Mucosa of descending colon (tissue), 3 donors: ENCODE measurements at regions of chr10 and their contacts with region 1.

Region 1: GRCh38 chr10:59625721-59626522 is 83.7 kb downstream of the SLC16A9 start:
- DNase-seq: peak in 1 of 3 donors; percentile 34
- ATAC-seq: peak; percentile 84
- H3K4me3 ChIP-seq: no peak overlapping the region
- H3K4me1 ChIP-seq: peaks cover 3% of the 10 kb centered on the region
- CTCF ChIP-seq: peak; percentile 56

Region 2: DNA sequence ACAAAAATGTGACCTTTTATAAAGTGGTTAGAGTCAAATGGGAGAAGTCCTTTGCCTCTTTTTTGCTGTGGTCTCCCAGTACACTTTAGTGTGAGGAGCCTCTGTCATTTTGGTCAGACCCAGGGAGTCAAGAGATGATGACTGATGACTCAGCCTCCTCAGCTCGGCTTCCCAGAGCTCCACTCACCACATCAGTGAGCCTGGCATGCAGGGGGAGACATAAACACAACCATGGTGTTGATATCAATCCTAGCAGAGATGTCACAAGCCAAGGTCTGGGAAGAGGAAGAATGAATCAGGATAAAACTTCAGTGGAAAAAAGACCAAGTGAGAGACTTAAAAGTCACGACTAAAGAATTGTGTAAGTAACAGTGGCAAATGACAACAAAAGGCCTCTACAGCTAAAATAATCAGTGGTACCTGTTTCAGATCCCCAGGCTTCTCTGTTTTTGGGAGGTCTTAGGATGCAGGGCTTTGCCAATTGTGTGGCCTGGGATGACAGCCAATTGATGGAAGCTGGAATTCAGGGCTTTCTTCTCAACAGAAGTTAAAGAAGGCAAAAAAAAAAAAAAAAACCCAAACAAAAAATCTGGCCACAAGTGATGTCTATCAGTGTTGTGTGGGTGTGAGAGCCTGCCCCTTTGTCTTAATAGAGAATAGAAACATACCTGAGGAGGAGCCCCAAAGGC is 1190.5 kb before region 1 on chr10:
- intact Hi-C with region 1: no loop called
- DNase-seq: peak in 2 of 3 donors; percentile 27 to 54
- ATAC-seq: peak; percentile 63
- H3K4me3 ChIP-seq: no peak overlapping the region
- H3K4me1 ChIP-seq: no peaks in the 10 kb centered on the region
- CTCF ChIP-seq: no peak

Region 3: DNA sequence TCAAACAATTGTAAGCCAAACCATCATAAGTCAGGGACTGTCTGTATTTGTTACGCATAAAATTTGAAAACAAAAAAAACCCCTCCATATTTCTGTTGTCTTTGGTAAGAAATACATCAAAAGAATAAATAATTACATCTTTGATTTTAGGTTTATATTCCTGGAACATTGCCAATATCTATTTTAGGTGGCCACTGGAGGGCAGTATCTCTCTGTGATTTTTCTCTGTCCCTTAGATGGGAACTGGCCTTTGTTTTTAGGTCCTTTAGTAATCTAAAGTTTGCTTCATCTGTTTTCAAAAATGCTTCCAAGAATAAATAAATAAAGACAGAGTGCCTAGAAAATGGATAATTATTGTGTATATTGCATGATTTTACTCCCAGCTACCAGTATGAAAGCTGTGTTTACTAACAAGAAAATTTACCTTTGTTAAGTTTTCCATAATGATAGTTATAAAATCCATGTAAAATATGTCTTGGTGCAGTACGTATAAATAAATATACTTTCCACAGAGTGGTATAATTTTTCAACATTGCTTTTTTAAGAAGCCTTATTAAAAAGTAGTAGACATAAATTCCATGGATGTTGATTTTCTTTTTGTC is 385.2 kb before region 1 on chr10:
- intact Hi-C with region 1: loop called in 1 of 2 experiments (anchors 5 kb)
- DNase-seq: peak in 1 of 3 donors; percentile 42
- ATAC-seq: no peak
- H3K4me3 ChIP-seq: no peak overlapping the region
- H3K4me1 ChIP-seq: no peaks in the 10 kb centered on the region
- CTCF ChIP-seq: no peak

Region 4: DNA sequence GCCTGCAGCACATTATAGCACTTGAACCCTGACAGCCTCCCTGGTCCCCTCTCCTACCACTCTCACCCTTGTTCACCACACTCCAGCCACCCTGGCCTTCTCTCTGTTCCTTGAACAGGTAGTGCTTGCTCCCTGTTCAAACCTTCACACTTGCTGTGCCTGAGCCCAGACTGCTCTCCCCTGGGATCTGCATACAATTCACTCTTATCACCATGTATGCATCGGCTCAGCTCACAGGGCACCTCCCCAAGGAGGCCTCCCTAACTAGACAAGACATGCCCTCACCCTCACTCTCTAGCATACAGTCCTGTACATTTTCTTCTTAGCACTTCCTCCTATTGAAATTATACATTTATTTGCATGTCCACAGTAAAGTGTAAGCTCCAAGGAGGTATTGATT is 322.9 kb before region 1 on chr10:
- intact Hi-C with region 1: no loop called
- DNase-seq: no peak
- ATAC-seq: peak; percentile 54
- H3K4me3 ChIP-seq: no peak overlapping the region
- H3K4me1 ChIP-seq: no peaks in the 10 kb centered on the region
- CTCF ChIP-seq: no peak

Region 5: DNA sequence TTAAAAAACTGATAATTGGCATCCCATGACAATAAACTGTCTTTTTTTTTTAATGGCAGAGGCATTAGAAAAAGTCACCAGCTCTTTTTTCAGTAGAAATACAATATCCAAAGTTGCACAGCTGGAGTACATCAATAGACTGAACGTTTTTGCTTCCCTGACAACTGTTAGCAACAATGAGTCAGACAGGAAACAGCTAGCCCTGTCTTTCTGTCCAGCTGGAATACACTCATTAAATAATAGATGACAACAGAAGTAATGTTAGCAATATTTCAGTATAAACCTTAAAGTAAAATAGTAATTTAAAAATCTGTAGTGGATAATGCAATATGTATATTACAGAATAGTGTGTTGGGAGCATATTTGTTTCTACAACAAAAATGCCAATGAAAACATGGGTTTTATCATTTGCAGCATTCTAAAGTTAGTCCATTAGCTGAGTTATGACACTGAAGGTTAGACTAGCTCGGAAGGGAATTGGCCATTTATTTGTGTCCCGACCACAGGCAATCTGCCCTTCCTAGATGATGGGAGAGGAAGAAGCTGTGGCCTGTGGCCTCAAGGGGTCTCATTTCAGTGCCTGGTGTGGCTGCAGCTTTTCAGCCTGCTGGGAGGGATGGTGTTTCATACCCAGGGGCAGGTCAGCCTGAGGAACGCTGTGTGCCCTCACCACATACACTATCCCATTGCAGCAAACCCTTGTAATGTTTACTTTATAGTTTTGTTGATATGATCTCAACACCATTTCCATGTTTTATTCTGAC is 89.6 kb before region 1 on chr10:
- intact Hi-C with region 1: no loop called
- DNase-seq: peak in 1 of 3 donors; percentile 11
- ATAC-seq: peak; percentile 67
- H3K4me3 ChIP-seq: no peak overlapping the region
- H3K4me1 ChIP-seq: no peaks in the 10 kb centered on the region
- CTCF ChIP-seq: no peak

Region 6: DNA sequence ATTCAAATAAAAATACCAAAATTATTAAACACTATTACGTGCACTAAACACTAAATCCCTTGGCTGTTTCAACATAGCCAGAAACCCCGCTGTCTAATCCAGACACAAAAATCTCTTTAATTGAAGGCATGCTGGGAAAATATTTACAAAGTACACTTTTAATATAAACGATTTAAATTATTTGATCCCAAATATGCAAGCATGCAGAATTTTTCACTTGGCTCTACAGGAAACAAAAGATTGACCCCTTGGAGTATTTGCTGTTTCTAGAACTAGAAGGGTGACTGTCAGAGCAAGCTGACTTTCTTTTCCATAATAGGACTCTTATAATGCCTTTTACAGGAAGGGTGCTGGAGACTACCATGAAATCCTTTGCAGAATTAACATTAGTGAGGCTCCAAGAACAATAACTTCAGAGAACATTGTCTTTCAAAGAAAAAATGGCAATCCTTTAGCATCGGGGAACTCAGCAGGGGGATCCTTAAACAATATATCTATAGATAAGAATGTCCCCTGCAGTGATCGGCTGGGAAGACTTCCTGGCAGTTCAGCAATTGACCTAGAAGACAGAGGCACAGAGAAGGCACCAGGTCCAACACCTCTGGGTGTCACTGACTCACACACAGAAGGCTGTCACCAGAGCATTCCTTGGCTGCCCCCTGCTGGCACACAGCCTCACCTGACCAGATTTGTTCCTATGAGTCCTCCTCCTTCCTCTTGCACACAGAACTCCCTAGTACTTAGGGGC is 183.1 kb after region 1 on chr10:
- intact Hi-C with region 1: loop called (anchors 2 to 10 kb)
- DNase-seq: peak; percentile 76 to 94 (median 91)
- ATAC-seq: peak; percentile 95
- H3K4me3 ChIP-seq: no peak overlapping the region
- H3K4me1 ChIP-seq: no peaks in the 10 kb centered on the region
- CTCF ChIP-seq: peak; percentile 63

Region 7: GRCh38 chr10:60032723-60033122 is 406.8 kb after region 1 on chr10:
- intact Hi-C with region 1: loop called in 1 of 2 experiments (anchors 10 kb)
- DNase-seq: peak in 1 of 3 donors; percentile 89
- ATAC-seq: peak; percentile 87
- H3K4me3 ChIP-seq: no peak overlapping the region
- H3K4me1 ChIP-seq: no peaks in the 10 kb centered on the region
- CTCF ChIP-seq: no peak